HEK293 (cell line): ENCODE measurements at regions of chr6 and their contacts with region 1.

Region 1: GRCh38 chr6:30453508-30454116 is 35.7 kb upstream of the HLA-E start:
- H3K4me3 ChIP-seq: no peak overlapping the region
- H3K27ac ChIP-seq: no peak overlapping the region
- H3K4me1 ChIP-seq: no peaks in the 10 kb centered on the region
- CTCF ChIP-seq: peak; percentile 97

Region 2: DNA sequence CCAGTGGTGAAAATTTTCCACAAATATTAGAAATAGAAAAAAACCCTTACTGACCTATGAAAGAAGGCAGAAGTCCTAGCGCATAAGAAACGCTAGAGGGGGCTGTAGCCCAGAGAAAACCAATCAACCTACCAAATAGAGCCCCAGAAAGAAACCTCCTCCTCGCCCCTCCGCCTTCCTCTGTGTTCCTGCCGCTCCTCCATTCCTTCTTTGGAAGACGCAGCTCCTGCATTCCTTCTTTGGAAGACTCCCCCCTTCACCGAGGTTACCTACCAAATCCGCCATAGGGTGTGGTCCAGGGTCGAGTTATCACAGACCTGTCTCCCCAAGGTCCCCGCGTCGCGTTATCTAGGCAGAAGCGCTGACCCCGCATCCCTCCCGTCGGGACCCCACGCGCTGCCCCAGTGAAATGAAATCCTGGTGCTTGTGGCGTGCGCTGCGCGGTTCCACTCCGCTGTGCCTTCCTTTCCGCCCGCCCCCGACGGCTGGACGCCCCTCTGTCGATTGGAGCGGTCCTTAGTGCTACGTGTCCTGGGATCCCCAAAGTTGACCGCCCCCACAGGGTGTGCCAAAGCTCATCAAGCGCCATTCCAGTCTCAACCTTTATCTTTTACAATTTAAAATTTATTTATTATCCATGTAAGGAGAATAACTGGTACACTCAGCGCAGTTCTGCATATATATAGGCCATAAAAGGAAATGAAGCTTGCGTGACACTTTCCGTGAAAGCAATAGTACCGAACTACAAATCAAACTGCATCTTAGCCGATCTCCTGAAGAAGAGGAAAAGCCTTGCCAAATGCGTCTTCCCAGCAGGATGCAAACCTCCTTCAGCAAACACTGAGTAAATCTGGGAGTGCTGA is 95.7 kb before region 1 on chr6:
- CTCF ChIA-PET with region 1: interaction called, 15 read pairs
- POLR2A ChIA-PET with region 1: no interaction called
- H3K4me3 ChIP-seq: peak overlapping the region; percentile 53
- H3K27ac ChIP-seq: no peak overlapping the region
- H3K4me1 ChIP-seq: no peaks in the 10 kb centered on the region
- CTCF ChIP-seq: peak; percentile 74

Region 3: DNA sequence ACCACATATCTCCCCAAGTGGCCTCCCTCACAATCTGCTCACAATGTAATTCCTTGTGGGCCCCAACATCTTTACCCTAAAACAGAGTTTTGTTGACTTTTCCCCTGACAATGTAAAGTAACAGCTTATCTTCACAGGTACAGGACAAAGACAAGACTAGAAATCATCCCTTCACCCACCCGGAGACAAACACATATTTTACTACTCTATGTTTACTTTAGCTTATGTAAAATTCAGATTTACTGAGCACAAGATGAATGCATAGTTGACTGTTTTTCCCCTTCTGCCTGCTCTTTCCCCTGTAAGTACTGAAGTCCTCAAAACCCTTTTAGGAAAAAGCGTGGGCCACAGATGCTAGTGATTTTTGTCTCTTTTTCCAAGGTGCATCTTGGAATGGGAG is 47.7 kb before region 1 on chr6:
- CTCF ChIA-PET with region 1: interaction called, 24 read pairs
- POLR2A ChIA-PET with region 1: no interaction called
- H3K4me3 ChIP-seq: no peak overlapping the region
- H3K27ac ChIP-seq: no peak overlapping the region
- H3K4me1 ChIP-seq: no peaks in the 10 kb centered on the region
- CTCF ChIP-seq: no peak

Region 4: GRCh38 chr6:30424549-30424948 is 29.1 kb before region 1 on chr6:
- CTCF ChIA-PET with region 1: interaction called, 19 read pairs
- POLR2A ChIA-PET with region 1: no interaction called
- H3K4me3 ChIP-seq: no peak overlapping the region
- H3K27ac ChIP-seq: no peak overlapping the region
- H3K4me1 ChIP-seq: no peaks in the 10 kb centered on the region
- CTCF ChIP-seq: no peak

Region 5: DNA sequence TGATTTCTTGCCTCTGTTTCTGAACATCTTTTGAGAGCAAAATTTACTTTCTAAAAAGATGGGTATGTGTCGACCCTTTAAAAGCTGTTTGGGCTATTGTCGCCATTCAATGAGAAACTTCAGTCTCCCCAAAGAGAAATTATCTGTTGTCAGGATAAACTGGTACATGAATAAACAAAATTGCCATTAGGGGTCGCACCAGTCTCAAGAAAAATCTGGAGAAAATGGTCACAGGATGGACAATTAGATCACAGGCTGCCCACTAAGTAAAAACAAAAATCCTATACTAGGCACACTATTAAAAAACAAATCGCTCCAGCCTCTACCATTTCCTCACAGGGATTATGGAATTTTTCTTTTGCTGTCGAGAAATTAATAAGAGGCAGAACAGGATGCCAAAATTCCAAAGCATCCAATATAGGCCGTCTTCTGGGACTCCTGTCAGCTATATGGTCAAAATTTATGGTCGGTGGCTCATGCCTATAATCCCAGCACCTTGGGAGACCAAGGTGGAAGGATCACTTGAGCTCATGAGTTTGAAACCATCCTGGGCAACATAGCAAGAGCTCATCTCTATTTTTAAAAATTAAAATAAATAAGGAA is 30.2 kb after region 1 on chr6:
- CTCF ChIA-PET with region 1: interaction called, 13 read pairs
- POLR2A ChIA-PET with region 1: no interaction called
- H3K4me3 ChIP-seq: no peak overlapping the region
- H3K27ac ChIP-seq: no peak overlapping the region
- H3K4me1 ChIP-seq: no peaks in the 10 kb centered on the region
- CTCF ChIP-seq: peak; percentile 33; the same call in 1 of the 2 replicates

Region 6: GRCh38 chr6:30548375-30548774 is 94.8 kb after region 1 on chr6:
- CTCF ChIA-PET with region 1: interaction called, 19 read pairs
- POLR2A ChIA-PET with region 1: interaction called, 4 read pairs
- H3K4me3 ChIP-seq: no peak overlapping the region
- H3K27ac ChIP-seq: no peak overlapping the region
- H3K4me1 ChIP-seq: no peaks in the 10 kb centered on the region
- CTCF ChIP-seq: no peak